CD8-positive, alpha-beta T cell (primary cell): ENCODE measurements at regions of chr5 and their contacts with region 1.

Region 1: DNA sequence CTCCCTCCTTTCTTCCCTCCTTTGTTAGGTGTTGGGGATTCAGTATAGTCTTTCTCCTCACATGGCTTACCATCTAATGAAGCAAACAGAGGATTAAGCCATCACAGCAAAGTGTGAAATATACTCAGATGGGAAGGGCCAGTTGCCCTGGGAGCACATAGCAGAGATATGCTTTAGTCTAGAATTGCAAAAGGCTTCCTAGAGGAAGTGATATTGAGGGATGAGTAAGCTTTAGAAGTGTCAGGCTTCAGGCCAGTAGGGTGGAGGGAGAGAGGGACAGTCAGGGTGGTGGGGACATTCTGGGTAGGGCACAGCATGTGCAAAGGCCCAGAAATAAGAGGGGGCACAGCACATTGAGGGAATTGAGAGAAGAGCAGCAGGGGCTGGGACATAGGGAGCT is 46.2 kb upstream of the GLRA1 start:
- DNase-seq: no peak
- ATAC-seq: no peak
- H3K4me3 ChIP-seq: no peak overlapping the region
- H3K4me3 Mint-ChIP-seq: no peak overlapping the region
- H3K27ac ChIP-seq: no peak overlapping the region
- H3K27ac Mint-ChIP-seq: no peak overlapping the region
- H3K4me1 ChIP-seq: no peaks in the 10 kb centered on the region
- H3K4me1 Mint-ChIP-seq: no peaks in the 10 kb centered on the region
- H3K27me3 ChIP-seq: no peaks in the 10 kb centered on the region
- H3K27me3 Mint-ChIP-seq: no peaks in the 10 kb centered on the region
- CTCF ChIP-seq: no peak

Region 2: GRCh38 chr5:151628112-151628823 is 342.6 kb before region 1 on chr5:
- CTCF ChIA-PET with region 1: no interaction called
- POLR2A ChIA-PET with region 1: no interaction called
- intact Hi-C with region 1: no loop called
- DNase-seq: no peak
- ATAC-seq: no peak
- H3K4me3 ChIP-seq: no peak overlapping the region
- H3K4me3 Mint-ChIP-seq: no peak overlapping the region
- H3K27ac ChIP-seq: no peak overlapping the region
- H3K27ac Mint-ChIP-seq: no peak overlapping the region
- H3K4me1 ChIP-seq: no peaks in the 10 kb centered on the region
- H3K4me1 Mint-ChIP-seq: no peaks in the 10 kb centered on the region
- H3K27me3 ChIP-seq: no peaks in the 10 kb centered on the region
- H3K27me3 Mint-ChIP-seq: peaks cover 9% of the 10 kb centered on the region
- CTCF ChIP-seq: no peak

Region 3: DNA sequence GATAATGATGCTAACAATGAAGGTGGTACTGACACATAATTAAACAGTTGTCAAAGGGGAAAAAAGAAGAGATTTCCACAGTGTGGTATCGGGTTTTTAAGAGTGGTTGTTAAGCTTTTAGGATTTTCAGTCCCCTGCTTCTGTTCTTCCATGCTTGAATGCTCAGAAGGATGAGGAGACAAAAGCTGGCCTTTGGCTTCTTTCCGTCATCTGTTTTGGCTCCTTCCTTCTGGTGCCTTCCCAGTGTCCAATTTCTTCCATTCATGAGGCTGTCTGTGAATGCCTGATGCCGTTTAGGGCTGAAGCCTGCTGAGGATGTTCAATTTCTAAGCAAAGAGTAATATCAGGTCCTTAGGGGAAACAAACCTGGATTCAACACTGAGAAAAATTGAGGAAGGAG is 133.3 kb after region 1 on chr5:
- CTCF ChIA-PET with region 1: no interaction called
- POLR2A ChIA-PET with region 1: no interaction called
- intact Hi-C with region 1: loop called in 1 of 2 experiments (anchors 10 kb)
- DNase-seq: no peak
- ATAC-seq: no peak
- H3K4me3 ChIP-seq: no peak overlapping the region
- H3K4me3 Mint-ChIP-seq: no peak overlapping the region
- H3K27ac ChIP-seq: no peak overlapping the region
- H3K27ac Mint-ChIP-seq: no peak overlapping the region
- H3K4me1 ChIP-seq: no peaks in the 10 kb centered on the region
- H3K4me1 Mint-ChIP-seq: no peaks in the 10 kb centered on the region
- H3K27me3 ChIP-seq: no peaks in the 10 kb centered on the region
- H3K27me3 Mint-ChIP-seq: peaks cover 5% of the 10 kb centered on the region
- CTCF ChIP-seq: no peak

Region 4: GRCh38 chr5:152274224-152274623 is 303.3 kb after region 1 on chr5:
- CTCF ChIA-PET with region 1: no interaction called
- POLR2A ChIA-PET with region 1: no interaction called
- intact Hi-C with region 1: no loop called
- DNase-seq: no peak
- ATAC-seq: no peak
- H3K4me3 ChIP-seq: no peak overlapping the region
- H3K4me3 Mint-ChIP-seq: no peak overlapping the region
- H3K27ac ChIP-seq: no peak overlapping the region
- H3K27ac Mint-ChIP-seq: no peak overlapping the region
- H3K4me1 ChIP-seq: no peaks in the 10 kb centered on the region
- H3K4me1 Mint-ChIP-seq: no peaks in the 10 kb centered on the region
- H3K27me3 ChIP-seq: no peaks in the 10 kb centered on the region
- H3K27me3 Mint-ChIP-seq: peaks cover 5% of the 10 kb centered on the region
- CTCF ChIP-seq: no peak